H1 (cell line): ENCODE measurements at regions of chr3 and their contacts with region 1.

Region 1: GRCh38 chr3:49411968-49412631 is at the starts of genes RHOA and TCTA:
- DNase-seq: peak; percentile 93 to 95
- H3K4me3 ChIP-seq: peak within 1 kb of the TSS; percentile 76 to 99 (median 90)
- H3K27ac ChIP-seq: peak within 1 kb of the TSS; percentile 86
- H3K4me1 ChIP-seq: peaks cover 3 to 11% (median 8%) of the 10 kb centered on the region in 4 experiments; a peak in 6 of 7 replicates
- H3K27me3 ChIP-seq: no peaks in the 10 kb centered on the region
- CTCF ChIP-seq: 0 out of 4 replicates have a peak, but pooled peaks of 1 of the 3 experiments have one; percentile 8
- EP300 ChIP-seq: no peak
- POLR2A ChIP-seq: peak; percentile 95 to 99
- RAD21 ChIP-seq: no peak; a peak in 1 of 4 replicates
- total RNA-seq, gene RHOA: 386 and 397 TPM in 2 replicates
- total RNA-seq, gene TCTA: 6.2 and 7.4 TPM in 2 replicates

Region 2: GRCh38 chr3:49093853-49094767 is 318.0 kb before region 1 on chr3 and contains the start of gene QRICH1:
- CTCF ChIA-PET with region 1: no interaction called
- POLR2A ChIA-PET with region 1: interaction called, 12 read pairs
- DNase-seq: peak; percentile 91 to 96
- H3K4me3 ChIP-seq: peak within 1 kb of the TSS; percentile 80 to 99 (median 89)
- H3K27ac ChIP-seq: peak within 1 kb of the TSS; percentile 88
- H3K4me1 ChIP-seq: no peaks in the 10 kb centered on the region; a peak in 1 of 7 replicates
- H3K27me3 ChIP-seq: no peaks in the 10 kb centered on the region
- CTCF ChIP-seq: peak; percentile 61 to 78 (median 65)
- EP300 ChIP-seq: no peak
- POLR2A ChIP-seq: peak; percentile 87 to 89
- RAD21 ChIP-seq: peak; percentile 47 to 59; a peak in 3 of 4 replicates
- total RNA-seq, gene QRICH1: 123 and 142 TPM in 2 replicates

Region 3: GRCh38 chr3:49244581-49245205 is 167.4 kb before region 1 on chr3:
- CTCF ChIA-PET with region 1: no interaction called
- POLR2A ChIA-PET with region 1: no interaction called
- DNase-seq: no peak
- H3K4me3 ChIP-seq: no peak overlapping the region
- H3K27ac ChIP-seq: no peak overlapping the region
- H3K4me1 ChIP-seq: no peaks in the 10 kb centered on the region
- H3K27me3 ChIP-seq: no peaks in the 10 kb centered on the region
- CTCF ChIP-seq: no peak
- EP300 ChIP-seq: no peak
- POLR2A ChIP-seq: no peak
- RAD21 ChIP-seq: peak in 1 of 2 experiments; percentile 19; a peak in 1 of 4 replicates

Region 4: DNA sequence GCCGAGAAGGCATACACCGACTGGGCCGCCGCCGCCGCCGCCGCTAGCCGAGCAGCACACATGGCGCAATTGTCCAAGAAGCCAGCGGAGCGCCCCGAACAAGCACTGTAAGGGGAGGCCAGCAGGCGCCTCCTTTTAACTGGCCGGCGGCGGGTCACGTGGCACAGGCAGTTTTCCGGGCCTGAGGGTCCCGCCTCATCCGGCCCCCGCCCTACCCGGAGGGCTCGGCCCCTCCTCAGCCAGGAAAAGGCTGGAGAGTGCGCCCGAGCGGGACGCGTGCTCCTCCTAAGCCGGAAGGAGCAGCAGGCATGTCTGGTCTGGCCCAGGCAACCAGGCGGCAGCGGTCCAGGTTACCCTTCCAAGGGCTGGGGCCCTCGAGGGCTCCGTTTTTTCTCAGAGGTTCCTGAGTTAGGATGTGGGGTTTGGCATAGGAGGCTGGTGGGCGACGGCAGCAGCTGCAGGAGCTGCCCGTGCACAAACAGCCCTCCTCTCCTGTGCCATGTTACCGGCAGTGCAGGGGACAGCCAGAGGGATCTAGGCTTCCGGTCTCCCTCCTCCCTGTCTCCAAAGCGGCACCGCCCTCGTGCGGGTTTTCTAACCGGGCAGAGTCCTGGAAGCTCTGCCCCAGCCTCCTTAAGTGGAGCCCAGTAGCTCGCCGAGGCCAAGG is 53.8 kb before region 1 on chr3 and contains the start of gene GPX1:
- CTCF ChIA-PET with region 1: interaction called, 3 read pairs
- POLR2A ChIA-PET with region 1: interaction called, 24 read pairs
- DNase-seq: peak; percentile 89 to 96
- H3K4me3 ChIP-seq: peak within 1 kb of the TSS; percentile 58 to 90 (median 86)
- H3K27ac ChIP-seq: peak within 1 kb of the TSS; percentile 92
- H3K4me1 ChIP-seq: peaks cover 1 to 3% (median 3%) of the 10 kb centered on the region in 4 experiments; a peak in 4 of 7 replicates
- H3K27me3 ChIP-seq: no peaks in the 10 kb centered on the region
- CTCF ChIP-seq: no peak
- EP300 ChIP-seq: no peak; a peak in 1 of 3 replicates
- POLR2A ChIP-seq: peak; percentile 70 to 75
- RAD21 ChIP-seq: peak in 1 of 2 experiments; percentile 8; a peak in 1 of 4 replicates
- total RNA-seq, gene GPX1: 250 and 252 TPM in 2 replicates

Region 5: GRCh38 chr3:49422379-49423248 is 10.5 kb after region 1 on chr3 and contains the start of gene AMT:
- CTCF ChIA-PET with region 1: interaction called, 16 read pairs
- POLR2A ChIA-PET with region 1: interaction called, 57 read pairs
- DNase-seq: peak; percentile 82 to 85
- H3K4me3 ChIP-seq: peak within 1 kb of the TSS; percentile 52 to 94 (median 84)
- H3K27ac ChIP-seq: peak within 1 kb of the TSS; percentile 60
- H3K4me1 ChIP-seq: peaks cover 6 to 12% (median 7%) of the 10 kb centered on the region in 4 experiments
- H3K27me3 ChIP-seq: 0 out of 7 replicates have a peak, but pooled peaks cover 0 to 1% (median 0%) of the 10 kb centered on the region in 4 experiments
- CTCF ChIP-seq: peak in 1 of 3 experiments; percentile 5; a peak in 1 of 4 replicates
- EP300 ChIP-seq: no peak
- POLR2A ChIP-seq: peak in 1 of 2 experiments; percentile 72; a peak in 2 of 3 replicates
- RAD21 ChIP-seq: peak; percentile 13 to 17; a peak in 1 of 4 replicates
- total RNA-seq, gene AMT: 44.3 and 46.5 TPM in 2 replicates

Region 6: DNA sequence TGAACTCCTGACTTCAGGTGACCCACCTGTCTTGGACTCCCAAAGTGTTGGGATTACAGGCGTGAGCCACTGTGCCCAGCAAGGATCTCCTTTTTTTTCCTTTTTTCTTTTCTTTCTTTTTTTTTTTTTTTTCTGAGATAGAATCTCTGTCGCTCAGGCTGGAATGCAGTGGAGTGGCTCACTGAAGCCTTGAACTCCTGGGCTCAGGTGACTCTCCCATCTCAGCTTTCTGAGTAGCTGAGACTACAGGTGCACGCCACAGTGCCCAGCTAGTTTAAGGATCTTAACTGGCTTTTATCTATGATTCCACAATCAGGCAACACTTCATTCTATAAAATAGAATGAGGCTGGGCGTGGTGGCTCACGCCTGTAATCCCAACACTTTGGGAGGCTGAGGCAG is 33.3 kb after region 1 on chr3:
- CTCF ChIA-PET with region 1: interaction called, 20 read pairs
- POLR2A ChIA-PET with region 1: interaction called, 9 read pairs
- DNase-seq: no peak
- H3K4me3 ChIP-seq: no peak overlapping the region
- H3K27ac ChIP-seq: no peak overlapping the region
- H3K4me1 ChIP-seq: no peaks in the 10 kb centered on the region
- H3K27me3 ChIP-seq: no peaks in the 10 kb centered on the region
- CTCF ChIP-seq: no peak
- EP300 ChIP-seq: no peak
- POLR2A ChIP-seq: no peak
- RAD21 ChIP-seq: no peak

Region 7: DNA sequence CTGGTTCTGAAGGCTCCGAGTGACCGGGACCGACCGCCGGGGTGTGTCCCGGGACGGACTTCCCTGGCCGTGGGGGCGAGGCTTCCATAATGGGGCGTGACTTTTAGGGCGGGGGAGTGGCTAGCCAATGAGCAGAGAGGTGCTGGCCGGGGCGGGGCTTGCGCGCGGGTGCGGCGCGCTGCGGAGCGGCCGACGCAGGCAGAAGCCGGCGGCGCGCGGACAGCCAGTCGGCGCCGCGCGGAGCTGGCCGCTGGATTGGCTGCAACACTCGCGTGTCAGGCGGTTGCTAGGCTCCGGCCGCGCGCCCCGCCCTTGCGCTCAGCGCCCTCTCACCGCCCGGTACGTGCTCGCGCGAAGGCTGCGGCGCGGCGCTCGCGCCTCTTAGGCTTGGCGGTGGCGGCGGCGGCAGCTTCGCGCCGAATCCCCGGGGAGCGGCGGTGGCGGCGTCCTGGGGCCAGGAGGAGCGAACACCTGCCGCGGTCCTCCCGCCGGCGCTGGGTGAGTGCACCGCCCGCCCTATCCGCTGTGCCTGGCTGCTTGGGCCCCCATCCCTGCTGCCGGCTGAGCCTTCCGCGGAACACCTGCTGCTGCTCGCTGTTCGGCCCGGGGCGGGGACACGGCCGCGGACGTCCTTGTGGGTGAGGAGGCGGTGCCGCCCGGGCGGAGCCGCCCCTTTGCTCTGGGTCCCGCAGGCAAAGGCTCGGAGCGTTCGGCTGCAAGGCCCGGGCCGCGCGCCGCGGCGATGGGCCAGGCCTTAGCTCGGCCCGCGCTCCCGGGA is 58.0 kb after region 1 on chr3 and contains the start of gene DAG1:
- CTCF ChIA-PET with region 1: no interaction called
- POLR2A ChIA-PET with region 1: interaction called, 32 read pairs
- DNase-seq: peak; percentile 87 to 98
- H3K4me3 ChIP-seq: peak within 1 kb of the TSS; percentile 74 to 94 (median 84)
- H3K27ac ChIP-seq: peak within 1 kb of the TSS; percentile 92
- H3K4me1 ChIP-seq: peaks cover 6 to 19% (median 13%) of the 10 kb centered on the region in 4 experiments
- H3K27me3 ChIP-seq: no peaks in the 10 kb centered on the region
- CTCF ChIP-seq: no peak
- EP300 ChIP-seq: no peak
- POLR2A ChIP-seq: peak; percentile 58 to 83
- RAD21 ChIP-seq: no peak
- total RNA-seq, gene DAG1: 137 and 138 TPM in 2 replicates

Region 8: GRCh38 chr3:49842843-49843517 is 430.9 kb after region 1 on chr3:
- CTCF ChIA-PET with region 1: no interaction called
- POLR2A ChIA-PET with region 1: no interaction called
- DNase-seq: no peak
- H3K4me3 ChIP-seq: no peak overlapping the region
- H3K27ac ChIP-seq: no peak overlapping the region
- H3K4me1 ChIP-seq: peaks cover 0 to 6% (median 0%) of the 10 kb centered on the region in 4 experiments; a peak in 2 of 7 replicates
- H3K27me3 ChIP-seq: no peaks in the 10 kb centered on the region
- CTCF ChIP-seq: no peak
- EP300 ChIP-seq: no peak
- POLR2A ChIP-seq: no peak
- RAD21 ChIP-seq: no peak